ENCODE measurements at regions of chr14 and their contacts with region 1.

Region 1: GRCh38 chr14:105549481-105549880 is 23.1 kb downstream of the TMEM121 start:
- DNase-seq: no peak
- H3K4me3 Mint-ChIP-seq: no peak overlapping the region
- H3K27ac Mint-ChIP-seq: no peak overlapping the region
- H3K4me1 Mint-ChIP-seq: no peaks in the 10 kb centered on the region
- H3K27me3 Mint-ChIP-seq: peaks cover 1% of the 10 kb centered on the region

Region 2: GRCh38 chr14:105537369-105538164 is 11.9 kb before region 1 on chr14:
- CTCF ChIA-PET with region 1: interaction called, 10 read pairs
- intact Hi-C with region 1: no loop called
- DNase-seq: peak; percentile 74
- H3K4me3 Mint-ChIP-seq: no peak overlapping the region
- H3K27ac Mint-ChIP-seq: no peak overlapping the region
- H3K4me1 Mint-ChIP-seq: no peaks in the 10 kb centered on the region
- H3K27me3 Mint-ChIP-seq: peaks cover 4% of the 10 kb centered on the region

Region 3: GRCh38 chr14:105917933-105918436 is 368.5 kb after region 1 on chr14:
- CTCF ChIA-PET with region 1: no interaction called
- intact Hi-C with region 1: no loop called
- DNase-seq: no peak
- H3K4me3 Mint-ChIP-seq: no peak overlapping the region
- H3K27ac Mint-ChIP-seq: no peak overlapping the region
- H3K4me1 Mint-ChIP-seq: no peaks in the 10 kb centered on the region
- H3K27me3 Mint-ChIP-seq: no peaks in the 10 kb centered on the region

Measured in activated naive CD4-positive, alpha-beta T cell treated with anti-CD3 and anti-CD28 coated beads for 36 hours (primary cell).